ENCODE measurements at regions of chr12 and their contacts with region 1.

Region 1: DNA sequence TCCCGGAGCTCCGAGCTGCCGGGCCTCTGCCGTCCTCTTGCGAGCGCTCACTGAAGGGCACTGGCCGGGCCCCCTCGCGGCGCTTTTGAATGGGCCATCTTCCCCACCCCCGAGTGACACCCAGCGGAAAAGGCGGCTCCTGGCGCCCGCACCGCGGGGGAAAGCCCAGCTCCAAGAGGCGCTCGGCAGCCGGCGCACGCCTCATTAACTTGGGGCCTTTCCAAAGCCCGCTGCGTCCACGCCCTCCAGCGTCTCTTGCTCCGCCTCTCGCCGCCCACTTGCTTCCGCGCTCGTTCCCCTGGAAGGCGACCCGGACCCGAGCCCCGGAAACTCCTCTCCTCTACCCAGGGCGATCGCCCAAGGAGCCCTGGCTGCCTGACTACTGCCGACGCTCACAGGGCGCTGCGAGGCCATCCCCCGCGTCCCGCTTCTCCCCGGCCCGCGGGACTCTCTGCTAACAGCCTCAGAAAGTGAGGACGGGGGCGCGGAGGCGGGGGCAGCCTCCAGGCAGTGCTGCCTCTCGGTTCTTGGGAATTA is at the start of gene PHLDA1:
- DNase-seq: peak; percentile 98
- H3K4me3 Mint-ChIP-seq: peak within 1 kb of the TSS; percentile 99
- H3K27ac Mint-ChIP-seq: peak within 1 kb of the TSS; percentile 99
- H3K4me1 Mint-ChIP-seq: peaks cover 35% of the 10 kb centered on the region
- H3K27me3 Mint-ChIP-seq: peaks cover 2% of the 10 kb centered on the region
- total RNA-seq, gene PHLDA1: 59.6 and 60.7 TPM in 2 replicates

Region 2: DNA sequence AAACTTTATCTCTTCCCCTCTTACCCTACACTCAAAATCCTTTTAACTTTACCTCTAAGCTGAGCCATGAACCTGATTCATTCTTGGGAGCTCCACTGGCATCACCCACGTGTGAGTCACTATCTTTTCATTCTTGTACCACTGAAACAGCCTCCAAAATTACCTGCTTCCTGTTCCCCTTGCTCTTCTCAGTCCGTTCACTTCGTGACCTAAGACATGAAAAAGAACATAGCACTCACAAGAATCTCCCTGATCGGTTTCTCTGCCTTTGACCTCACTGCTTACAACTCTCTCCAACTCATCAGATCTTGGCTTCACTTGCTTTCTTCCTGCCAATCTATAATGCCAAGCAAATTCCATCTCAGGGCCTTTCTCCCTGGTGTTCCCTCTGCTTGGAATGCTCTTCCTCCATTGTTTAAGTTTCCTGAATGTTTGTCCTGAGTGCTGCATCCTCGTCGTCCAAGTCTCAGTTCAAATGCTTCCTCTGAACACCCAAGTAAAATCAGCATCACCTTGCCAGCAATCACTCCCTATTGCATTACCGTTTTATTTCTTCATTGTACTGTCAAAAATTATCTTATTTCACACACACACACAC is 541.9 kb before region 1 on chr12:
- intact Hi-C with region 1: loop called (anchors 1 kb)
- DNase-seq: peak; percentile 63
- H3K4me3 Mint-ChIP-seq: peak overlapping the region; percentile 39
- H3K27ac Mint-ChIP-seq: peak overlapping the region; percentile 52
- H3K4me1 Mint-ChIP-seq: peaks cover 22% of the 10 kb centered on the region
- H3K27me3 Mint-ChIP-seq: no peaks in the 10 kb centered on the region

Region 3: DNA sequence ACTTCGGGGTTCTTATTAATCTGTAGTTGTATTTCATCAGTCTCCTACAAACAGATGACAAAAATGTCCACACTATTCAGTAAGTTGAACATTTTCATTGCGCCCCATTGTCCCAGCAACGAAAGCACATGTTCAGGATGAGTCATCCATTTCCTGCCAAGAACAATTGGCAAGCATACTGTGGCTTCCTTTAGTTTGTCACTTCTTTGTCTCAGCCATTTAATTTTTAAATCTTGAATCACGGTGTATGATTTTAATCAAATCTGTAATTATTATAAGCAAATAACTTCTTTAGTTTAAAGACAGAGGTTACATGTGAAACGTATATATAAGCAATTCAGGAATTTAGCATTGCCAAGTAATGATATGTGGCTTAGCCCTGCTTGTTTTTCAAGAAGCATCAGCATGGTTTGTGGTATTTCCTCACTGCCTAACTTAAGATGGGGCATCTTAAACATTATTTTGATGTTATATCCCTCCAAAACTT is 308.8 kb before region 1 on chr12:
- intact Hi-C with region 1: loop called (anchors 5 kb)
- DNase-seq: peak; percentile 82
- H3K4me3 Mint-ChIP-seq: peak overlapping the region; percentile 34
- H3K27ac Mint-ChIP-seq: peak overlapping the region; percentile 83
- H3K4me1 Mint-ChIP-seq: peaks cover 20% of the 10 kb centered on the region
- H3K27me3 Mint-ChIP-seq: peaks cover 7% of the 10 kb centered on the region

Region 4: GRCh38 chr12:75933101-75933500 is 98.5 kb before region 1 on chr12:
- intact Hi-C with region 1: loop called (anchors 1 kb)
- DNase-seq: no peak
- H3K4me3 Mint-ChIP-seq: no peak overlapping the region
- H3K27ac Mint-ChIP-seq: no peak overlapping the region
- H3K4me1 Mint-ChIP-seq: peaks cover 45% of the 10 kb centered on the region
- H3K27me3 Mint-ChIP-seq: no peaks in the 10 kb centered on the region

Region 5: DNA sequence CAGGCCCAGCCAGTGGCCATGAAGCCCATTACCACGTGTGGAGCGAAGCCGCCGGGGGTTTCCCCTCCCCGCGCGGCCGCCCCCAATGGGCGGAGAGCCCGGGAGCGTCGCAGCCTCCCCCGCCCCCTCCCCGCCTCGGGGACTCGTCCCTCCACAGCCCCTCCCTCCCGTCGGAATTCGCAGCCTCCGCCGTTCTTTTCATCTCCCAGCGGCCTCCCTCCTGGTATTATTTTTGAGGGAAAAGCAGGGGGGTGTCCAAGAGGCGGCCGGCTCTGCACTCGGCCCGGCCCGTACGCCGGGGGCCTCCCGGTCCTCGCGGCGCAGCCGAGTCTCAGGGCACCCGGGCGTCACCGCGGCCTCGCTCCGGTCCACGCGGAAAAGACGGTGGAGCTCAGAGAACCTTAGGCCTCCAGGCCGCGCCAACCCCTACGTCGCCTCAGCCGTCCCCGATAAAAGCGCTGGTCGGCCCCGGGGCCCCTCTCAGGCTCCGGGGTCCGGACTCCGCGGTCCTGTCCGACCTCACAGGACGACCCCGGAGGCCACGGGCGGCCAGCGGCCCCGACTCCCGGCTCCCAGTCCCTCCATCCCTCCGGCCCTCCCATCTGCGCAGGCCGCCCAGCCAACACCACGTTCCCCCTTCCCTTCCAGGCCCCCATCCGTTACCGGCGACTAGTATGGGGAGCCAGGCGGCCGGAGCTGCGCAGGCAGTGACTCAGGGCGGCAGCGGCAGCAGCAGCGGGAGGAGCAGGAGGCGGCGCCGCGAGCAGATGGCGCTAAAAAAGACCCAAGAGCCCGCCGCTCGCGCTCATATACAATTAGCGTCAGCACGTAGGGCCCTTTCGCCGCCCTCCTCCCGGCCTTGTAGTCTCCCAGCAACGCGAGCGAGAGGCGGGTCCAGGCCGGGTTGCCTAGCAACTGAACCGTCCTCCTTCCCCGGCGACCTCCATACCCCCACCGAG is 52.6 kb after region 1 on chr12 and contains the start of gene NAP1L1:
- intact Hi-C with region 1: loop called (anchors 2 kb)
- DNase-seq: peak; percentile 99
- H3K4me3 Mint-ChIP-seq: peak within 1 kb of the TSS; percentile 100
- H3K27ac Mint-ChIP-seq: peak within 1 kb of the TSS; percentile 100
- H3K4me1 Mint-ChIP-seq: peaks cover 42% of the 10 kb centered on the region
- H3K27me3 Mint-ChIP-seq: no peaks in the 10 kb centered on the region
- total RNA-seq, gene NAP1L1: 652 and 689 TPM in 2 replicates

Measured in activated CD4-positive, alpha-beta T cell treated with anti-CD3 and anti-CD28 coated beads, Interleukin-2, amount 10 ng/mL, durations not matched to agents 24 days and 14 days (primary cell).